ENCODE measurements at regions of chr16 and their contacts with region 1.

Region 1: DNA sequence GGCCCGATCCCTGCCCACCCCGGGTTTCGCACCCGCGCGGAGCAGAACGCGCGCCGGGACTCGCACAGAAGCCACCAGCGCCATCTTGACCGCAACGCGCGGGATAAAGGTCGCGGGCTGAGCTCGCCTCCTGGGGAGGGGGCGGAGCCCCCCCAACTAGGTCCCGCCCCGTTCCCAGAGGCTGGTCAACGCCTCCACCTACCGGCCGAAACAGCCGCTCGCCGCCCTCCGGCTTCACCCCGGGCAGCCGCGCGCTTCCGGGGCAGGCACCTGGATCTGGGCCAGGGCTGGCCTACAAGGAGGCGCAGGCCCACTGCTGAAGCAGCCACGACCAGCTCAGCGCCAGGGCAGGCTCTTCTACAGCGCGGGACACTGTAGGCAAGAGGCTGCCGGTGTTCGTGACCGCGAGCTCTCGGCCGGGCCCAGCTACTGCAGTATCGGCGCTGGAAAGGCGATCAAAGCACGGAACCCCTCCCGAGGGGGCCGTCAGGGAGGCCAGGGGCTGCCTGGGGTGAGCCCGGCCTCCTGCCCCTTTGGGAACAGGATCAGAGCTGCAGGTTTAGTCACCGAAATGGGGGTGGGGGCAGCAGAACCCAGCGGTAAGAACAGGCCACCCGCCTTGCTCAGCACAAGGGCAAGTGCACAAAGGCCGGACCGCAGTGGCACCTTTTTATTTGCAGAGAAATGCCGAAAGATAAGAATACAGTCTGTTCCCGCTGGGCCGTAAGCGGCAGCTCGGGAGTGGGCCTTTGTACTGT is at the start of gene ECI1:
- DNase-seq: peak; percentile 94
- H3K4me3 Mint-ChIP-seq: peak within 1 kb of the TSS; percentile 92
- H3K27ac Mint-ChIP-seq: peak within 1 kb of the TSS; percentile 91
- H3K4me1 Mint-ChIP-seq: no peaks in the 10 kb centered on the region
- H3K27me3 Mint-ChIP-seq: no peaks in the 10 kb centered on the region
- CTCF ChIP-seq: peak; percentile 51
- total RNA-seq, gene ECI1: 115 and 154 TPM in 2 replicates

Region 2: GRCh38 chr16:2183671-2184070 is 68.0 kb before region 1 on chr16:
- CTCF ChIA-PET with region 1: no interaction called
- POLR2A ChIA-PET with region 1: no interaction called
- intact Hi-C with region 1: no loop called
- DNase-seq: no peak
- H3K4me3 Mint-ChIP-seq: no peak overlapping the region
- H3K27ac Mint-ChIP-seq: no peak overlapping the region
- H3K4me1 Mint-ChIP-seq: peaks cover 5% of the 10 kb centered on the region
- H3K27me3 Mint-ChIP-seq: no peaks in the 10 kb centered on the region
- CTCF ChIP-seq: no peak

Region 3: GRCh38 chr16:2194852-2195321 is 56.8 kb before region 1 on chr16:
- CTCF ChIA-PET with region 1: interaction called, 7 read pairs
- POLR2A ChIA-PET with region 1: interaction called, 14 read pairs
- intact Hi-C with region 1: no loop called
- DNase-seq: peak; percentile 70
- H3K4me3 Mint-ChIP-seq: no peak overlapping the region
- H3K27ac Mint-ChIP-seq: no peak overlapping the region
- H3K4me1 Mint-ChIP-seq: no peaks in the 10 kb centered on the region
- H3K27me3 Mint-ChIP-seq: no peaks in the 10 kb centered on the region
- CTCF ChIP-seq: peak; percentile 68

Region 4: GRCh38 chr16:2213817-2214720 is 37.6 kb before region 1 on chr16:
- CTCF ChIA-PET with region 1: interaction called, 4 read pairs
- POLR2A ChIA-PET with region 1: interaction called, 40 read pairs
- intact Hi-C with region 1: no loop called
- DNase-seq: no peak
- H3K4me3 Mint-ChIP-seq: peak overlapping the region; percentile 77
- H3K27ac Mint-ChIP-seq: peak overlapping the region; percentile 33
- H3K4me1 Mint-ChIP-seq: peaks cover 18% of the 10 kb centered on the region
- H3K27me3 Mint-ChIP-seq: no peaks in the 10 kb centered on the region
- CTCF ChIP-seq: no peak

Region 5: GRCh38 chr16:2236337-2237101 is 15.1 kb before region 1 on chr16 and contains the start of gene DNASE1L2:
- CTCF ChIA-PET with region 1: interaction called, 6 read pairs
- POLR2A ChIA-PET with region 1: interaction called, 15 read pairs
- intact Hi-C with region 1: no loop called
- DNase-seq: no peak
- H3K4me3 Mint-ChIP-seq: no peak within 1 kb of the TSS
- H3K27ac Mint-ChIP-seq: no peak within 1 kb of the TSS
- H3K4me1 Mint-ChIP-seq: no peaks in the 10 kb centered on the region
- H3K27me3 Mint-ChIP-seq: no peaks in the 10 kb centered on the region
- CTCF ChIP-seq: no peak
- total RNA-seq, gene DNASE1L2: 1.5 and 3.8 TPM in 2 replicates

Region 6: DNA sequence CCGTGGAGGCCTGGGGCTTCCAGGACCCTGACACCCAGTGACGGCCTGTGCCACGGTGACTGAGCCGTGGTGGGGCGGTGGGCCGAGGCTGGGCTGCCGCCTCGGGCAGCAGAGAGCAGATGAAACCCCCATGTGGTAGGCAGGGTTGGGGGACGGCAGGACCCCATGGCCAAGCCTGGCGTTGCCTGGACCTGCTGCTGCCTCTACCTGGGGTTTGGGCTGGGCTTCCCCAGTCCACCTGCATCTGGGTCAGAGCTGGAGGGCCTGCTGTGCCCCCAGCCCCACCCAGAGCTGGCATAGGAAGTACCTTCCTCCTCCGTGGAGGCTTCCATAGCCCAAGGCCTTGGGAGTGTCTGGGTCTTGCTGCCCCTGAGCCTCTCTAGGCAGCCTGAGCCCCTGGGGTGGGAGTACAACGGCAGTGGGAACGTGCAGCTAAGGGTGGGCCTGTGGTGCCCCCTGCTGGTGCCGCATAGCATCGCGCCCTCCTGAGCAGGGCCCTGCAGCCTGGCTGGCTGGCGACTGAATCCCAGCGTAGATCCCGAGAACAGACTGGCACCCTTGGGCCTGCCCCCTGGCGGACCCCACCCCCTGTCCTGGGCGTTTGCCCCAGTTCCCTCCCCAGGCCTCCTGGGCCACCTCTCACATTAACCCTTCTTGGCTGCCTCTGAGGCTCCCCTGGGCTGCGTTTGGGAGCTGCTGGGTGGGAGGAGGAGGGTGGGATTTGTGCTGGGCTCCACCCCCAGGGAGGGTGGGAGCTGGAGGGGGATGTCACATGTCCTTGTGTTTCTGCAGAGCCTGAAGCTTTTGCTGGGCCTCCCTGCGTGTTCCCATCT is 249.5 kb after region 1 on chr16:
- CTCF ChIA-PET with region 1: no interaction called
- POLR2A ChIA-PET with region 1: interaction called, 11 read pairs
- intact Hi-C with region 1: no loop called
- DNase-seq: peak; percentile 62
- H3K4me3 Mint-ChIP-seq: no peak overlapping the region
- H3K27ac Mint-ChIP-seq: no peak overlapping the region
- H3K4me1 Mint-ChIP-seq: peaks cover 5% of the 10 kb centered on the region
- H3K27me3 Mint-ChIP-seq: no peaks in the 10 kb centered on the region
- CTCF ChIP-seq: peak; percentile 99